ENCODE measurements at regions of chr7 and their contacts with region 1.

Region 1: DNA sequence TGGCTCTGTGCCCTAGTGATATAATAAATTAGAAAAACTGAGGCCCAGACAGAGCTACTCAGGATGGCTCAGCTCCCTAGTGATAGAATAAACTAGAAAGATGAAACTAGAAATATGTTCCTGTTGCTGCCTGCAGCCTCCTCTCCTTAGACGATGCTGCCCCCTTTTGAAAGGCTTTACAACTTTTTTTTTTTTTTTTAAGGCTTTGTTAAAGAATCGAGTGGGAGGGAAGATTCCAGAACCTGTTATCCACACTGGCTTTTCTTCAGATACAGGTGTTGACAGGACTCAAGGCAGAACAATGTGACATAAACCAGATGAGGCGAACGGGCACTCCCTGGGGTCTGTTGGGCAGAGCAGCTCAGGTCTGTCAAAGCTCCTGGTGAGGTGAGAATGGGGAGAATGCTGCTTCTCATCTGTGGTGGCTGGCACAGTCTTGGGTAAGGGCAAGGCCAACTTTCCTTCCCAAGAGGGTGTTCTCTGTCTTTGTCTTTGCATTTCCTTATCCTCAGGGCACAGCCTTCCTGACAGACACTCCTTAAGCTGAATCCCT is 175.1 kb downstream of the COBL start:
- DNase-seq: peak; percentile 60
- ATAC-seq: peak; percentile 58
- H3K4me3 ChIP-seq: no peak overlapping the region
- H3K27ac ChIP-seq: no peak overlapping the region
- H3K4me1 ChIP-seq: peaks cover 18% of the 10 kb centered on the region
- H3K27me3 ChIP-seq: no peaks in the 10 kb centered on the region
- CTCF ChIP-seq: peak; percentile 84

Region 2: DNA sequence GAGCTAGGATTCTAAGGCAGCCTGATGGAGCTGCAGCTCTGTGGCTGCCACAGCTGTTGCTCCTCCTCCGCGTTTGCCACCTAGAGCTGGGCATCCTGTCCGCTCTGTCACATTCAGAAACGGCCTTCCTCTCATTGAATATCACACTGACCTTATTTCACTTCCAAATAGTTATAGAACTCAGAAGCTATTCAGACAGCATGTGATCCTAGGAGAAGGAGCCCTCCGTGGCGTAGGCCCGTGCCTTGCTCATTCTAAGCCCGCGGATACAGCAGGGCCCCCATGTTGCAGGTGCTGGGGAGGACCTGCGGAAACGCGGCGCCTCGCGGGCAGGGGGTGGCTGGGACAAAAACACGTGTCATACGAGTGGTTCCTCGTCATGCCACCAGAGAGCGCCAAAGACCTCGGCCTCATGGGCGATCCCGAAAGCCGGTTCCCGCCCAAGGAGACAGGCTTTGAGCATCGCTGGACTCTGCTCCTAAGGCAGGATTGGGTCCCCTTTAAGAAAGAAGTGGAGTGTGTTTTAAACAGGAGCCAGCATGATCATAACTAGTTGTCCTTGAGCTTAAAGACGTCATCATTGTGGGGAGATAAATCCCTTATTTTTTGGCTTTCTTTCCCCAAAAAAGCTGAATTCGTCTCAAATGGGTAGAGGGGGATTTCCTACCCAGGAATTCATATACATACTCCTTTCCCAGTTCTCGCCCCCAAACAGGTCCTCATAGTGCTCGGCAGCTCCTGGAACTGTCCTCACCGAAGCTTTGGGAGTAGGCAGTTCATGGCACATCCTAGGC is 673.5 kb before region 1 on chr7:
- CTCF ChIA-PET with region 1: interaction called, 5 read pairs
- POLR2A ChIA-PET with region 1: no interaction called
- intact Hi-C with region 1: loop called (anchors 1 kb)
- DNase-seq: peak; percentile 84
- ATAC-seq: peak; percentile 92
- H3K4me3 ChIP-seq: peak overlapping the region; percentile 57
- H3K27ac ChIP-seq: no peak overlapping the region
- H3K4me1 ChIP-seq: peaks cover 5% of the 10 kb centered on the region; the same call in 1 of the 2 replicates
- H3K27me3 ChIP-seq: no peaks in the 10 kb centered on the region
- CTCF ChIP-seq: peak; percentile 89

Region 3: DNA sequence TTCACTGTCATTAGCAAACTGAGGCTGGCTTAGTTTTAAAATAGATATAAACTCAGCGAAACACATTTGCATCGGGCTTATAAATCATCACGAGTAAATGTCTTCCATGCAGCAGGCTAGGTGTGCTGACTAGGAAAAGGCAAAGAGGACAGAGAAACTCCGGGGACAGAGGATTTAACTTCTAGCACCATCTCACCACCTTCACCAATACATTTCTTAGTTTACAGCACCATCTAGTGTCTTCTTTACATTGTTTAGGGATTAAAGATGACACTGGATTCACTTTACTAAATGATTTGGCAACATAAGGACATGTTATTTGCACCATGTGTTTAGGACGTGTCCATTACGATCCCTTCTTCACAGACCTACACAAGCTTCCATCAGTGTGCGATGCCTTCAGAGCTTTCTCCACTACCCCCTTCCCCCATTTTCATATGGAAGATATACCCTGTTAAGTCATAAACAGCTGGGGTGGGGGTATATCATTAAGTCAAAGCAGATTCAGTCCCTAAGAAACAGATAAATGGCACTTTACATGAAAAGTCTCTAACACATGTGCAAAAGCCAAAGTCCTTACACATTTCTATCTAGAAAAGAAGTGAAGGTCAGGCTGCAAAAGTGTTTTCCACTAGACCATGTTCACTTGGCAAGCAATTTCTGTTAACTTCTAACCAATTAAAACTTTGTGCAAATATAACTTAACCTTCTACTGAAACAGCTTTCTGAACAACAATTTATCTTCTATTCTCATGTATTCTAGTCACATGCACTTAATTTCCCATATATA is 462.1 kb before region 1 on chr7:
- CTCF ChIA-PET with region 1: no interaction called
- POLR2A ChIA-PET with region 1: no interaction called
- intact Hi-C with region 1: loop called (anchors 2 kb)
- DNase-seq: peak; percentile 76
- ATAC-seq: peak; percentile 66
- H3K4me3 ChIP-seq: no peak overlapping the region
- H3K27ac ChIP-seq: no peak overlapping the region
- H3K4me1 ChIP-seq: peaks cover 8% of the 10 kb centered on the region
- H3K27me3 ChIP-seq: no peaks in the 10 kb centered on the region
- CTCF ChIP-seq: peak; percentile 63

Region 4: DNA sequence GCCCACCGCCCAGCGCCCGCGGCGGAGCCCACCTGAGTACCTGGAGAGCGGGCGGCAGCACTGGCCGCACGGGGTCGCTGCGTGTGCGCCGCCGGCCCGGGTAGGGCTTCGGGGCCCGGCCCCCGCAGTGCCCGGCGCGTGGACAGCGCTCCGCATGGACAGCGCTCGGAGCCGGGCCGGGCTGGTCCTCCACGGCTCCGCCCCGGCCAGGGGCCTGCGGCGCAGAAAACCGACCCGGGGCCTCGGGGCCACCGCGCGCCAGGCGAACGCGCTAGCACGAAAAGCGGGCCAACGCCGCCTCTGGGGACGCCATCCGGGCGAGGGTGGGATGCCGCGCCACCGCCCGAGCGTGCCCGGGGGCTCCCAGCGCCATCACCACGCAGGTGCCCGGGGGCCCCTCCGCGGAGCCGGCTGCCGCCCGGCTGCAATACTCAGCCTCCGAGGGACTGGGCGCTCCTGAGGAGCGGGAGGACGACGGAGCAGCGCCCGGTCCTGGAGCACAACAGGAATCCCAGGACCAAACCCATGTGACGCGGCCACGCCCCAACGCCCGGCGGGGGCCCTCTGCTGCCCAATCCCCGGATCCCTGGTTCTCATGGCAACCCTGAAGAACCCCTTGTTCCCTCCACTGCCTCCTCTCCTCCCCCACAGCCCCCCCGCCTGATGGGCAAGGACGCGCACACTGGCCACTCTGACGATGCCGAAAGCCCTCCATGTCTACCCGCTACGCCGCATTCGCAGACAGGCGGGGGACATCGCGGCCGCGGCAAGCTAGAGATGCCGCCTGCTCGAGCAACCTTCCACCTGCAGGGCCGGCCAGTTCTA is 358.9 kb before region 1 on chr7 and contains the start of gene GRB10:
- CTCF ChIA-PET with region 1: interaction called, 7 read pairs
- POLR2A ChIA-PET with region 1: no interaction called
- intact Hi-C with region 1: loop called (anchors 5 kb)
- DNase-seq: peak; percentile 56
- ATAC-seq: peak; percentile 84
- H3K4me3 ChIP-seq: peak within 1 kb of the TSS; percentile 80
- H3K27ac ChIP-seq: peak within 1 kb of the TSS; percentile 57
- H3K4me1 ChIP-seq: peaks cover 7% of the 10 kb centered on the region; the same call in 1 of the 2 replicates
- H3K27me3 ChIP-seq: no peaks in the 10 kb centered on the region
- CTCF ChIP-seq: 0 out of 2 replicates have a peak, but pooled peaks have one; percentile 26
- total RNA-seq, gene GRB10: 61.3 and 89.8 TPM in 2 replicates

Region 5: GRCh38 chr7:51067757-51068156 is 73.8 kb before region 1 on chr7:
- CTCF ChIA-PET with region 1: interaction called, 4 read pairs
- POLR2A ChIA-PET with region 1: no interaction called
- intact Hi-C with region 1: loop called (anchors 1 kb)
- DNase-seq: peak; percentile 85
- ATAC-seq: peak; percentile 65
- H3K4me3 ChIP-seq: no peak overlapping the region
- H3K27ac ChIP-seq: no peak overlapping the region
- H3K4me1 ChIP-seq: peaks cover 28% of the 10 kb centered on the region
- H3K27me3 ChIP-seq: no peaks in the 10 kb centered on the region
- CTCF ChIP-seq: peak; percentile 90

Region 6: GRCh38 chr7:51101111-51101757 is 40.3 kb before region 1 on chr7:
- CTCF ChIA-PET with region 1: interaction called, 3 read pairs
- POLR2A ChIA-PET with region 1: no interaction called
- intact Hi-C with region 1: loop called (anchors 1 kb)
- DNase-seq: peak; percentile 24
- ATAC-seq: peak; percentile 85
- H3K4me3 ChIP-seq: no peak overlapping the region
- H3K27ac ChIP-seq: no peak overlapping the region
- H3K4me1 ChIP-seq: peaks cover 10% of the 10 kb centered on the region; the same call in 1 of the 2 replicates
- H3K27me3 ChIP-seq: no peaks in the 10 kb centered on the region
- CTCF ChIP-seq: no peak